ENCODE measurements at regions of chr5 and their contacts with region 1.

Region 1: GRCh38 chr5:102681407-102681983 is 73.6 kb upstream of the PAM start:
- DNase-seq: peak; percentile 84
- H3K4me3 Mint-ChIP-seq: no peak overlapping the region
- H3K27ac Mint-ChIP-seq: no peak overlapping the region
- H3K4me1 Mint-ChIP-seq: no peaks in the 10 kb centered on the region
- H3K27me3 Mint-ChIP-seq: peaks cover 7% of the 10 kb centered on the region

Region 2: GRCh38 chr5:102583276-102584124 is 98.0 kb before region 1 on chr5:
- CTCF ChIA-PET with region 1: interaction called, 6 read pairs
- intact Hi-C with region 1: loop called (anchors 2 kb)
- DNase-seq: no peak
- H3K4me3 Mint-ChIP-seq: no peak overlapping the region
- H3K27ac Mint-ChIP-seq: no peak overlapping the region
- H3K4me1 Mint-ChIP-seq: no peaks in the 10 kb centered on the region
- H3K27me3 Mint-ChIP-seq: peaks cover 6% of the 10 kb centered on the region

Region 3: DNA sequence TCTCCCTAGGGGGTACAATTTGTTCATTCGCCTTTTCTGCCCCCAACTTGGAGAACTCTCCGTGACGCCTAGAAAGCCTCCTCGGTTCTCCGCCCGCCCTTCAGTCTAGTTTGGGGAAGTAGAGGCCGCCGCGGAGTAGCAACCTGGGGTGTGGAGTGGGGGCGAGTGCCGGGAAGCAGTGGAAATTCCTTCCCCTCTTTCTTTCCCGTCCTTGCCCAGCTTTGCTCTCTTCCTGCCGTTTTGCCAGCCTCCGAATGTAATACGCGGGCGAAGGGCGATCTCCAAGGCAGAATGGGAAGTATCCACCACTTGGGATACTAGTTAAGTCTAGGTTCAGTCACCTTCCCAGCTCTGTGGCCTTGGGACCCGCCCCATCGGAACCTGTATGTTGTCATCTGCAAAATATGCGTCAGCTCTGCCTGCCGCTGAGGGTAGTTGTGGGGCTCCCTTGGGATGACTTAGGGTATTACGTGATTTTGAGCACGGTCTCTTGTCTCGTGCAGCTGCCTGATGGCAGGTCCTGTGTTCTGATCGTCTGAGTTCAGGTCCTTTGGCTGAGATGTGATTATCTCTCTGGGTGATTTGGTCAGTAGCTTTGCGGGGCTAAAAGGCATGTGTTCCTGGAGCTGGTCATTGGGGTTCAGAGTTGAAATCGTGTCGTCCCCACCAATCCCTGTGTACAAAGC is 74.3 kb after region 1 on chr5:
- CTCF ChIA-PET with region 1: interaction called, 5 read pairs
- intact Hi-C with region 1: loop called (anchors 2 kb)
- DNase-seq: peak; percentile 88
- H3K4me3 Mint-ChIP-seq: peak overlapping the region; percentile 93
- H3K27ac Mint-ChIP-seq: peak overlapping the region; percentile 93
- H3K4me1 Mint-ChIP-seq: peaks cover 52% of the 10 kb centered on the region
- H3K27me3 Mint-ChIP-seq: peaks cover 17% of the 10 kb centered on the region

Region 4: DNA sequence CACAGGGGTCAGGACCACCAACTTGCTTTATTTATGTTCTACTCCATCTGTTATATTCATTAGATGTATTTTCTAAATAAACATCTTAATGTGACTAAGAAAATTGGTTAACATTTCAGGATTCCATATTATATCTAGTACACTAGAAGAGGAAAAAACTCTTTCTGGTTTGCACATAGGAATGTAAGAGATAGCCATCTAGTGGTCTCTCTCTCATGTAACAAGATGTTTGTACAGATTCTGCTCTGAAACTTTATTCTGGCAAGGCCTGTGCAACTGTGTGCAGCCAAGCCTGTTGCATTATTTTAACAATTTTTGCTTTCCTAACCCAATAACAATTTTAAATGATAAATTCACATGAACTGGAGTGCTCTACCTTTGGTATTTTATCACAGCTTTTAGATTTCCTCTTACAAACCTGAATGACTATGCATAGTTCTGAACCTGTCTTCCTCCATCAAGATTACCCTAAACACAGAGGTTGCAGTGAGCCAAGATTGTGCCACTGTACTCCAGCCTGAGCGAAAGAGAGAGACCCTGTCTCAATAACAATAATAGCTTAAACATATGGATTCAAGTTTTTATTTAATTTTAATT is 290.3 kb after region 1 on chr5:
- CTCF ChIA-PET with region 1: interaction called, 4 read pairs
- intact Hi-C with region 1: loop called (anchors 1 kb)
- DNase-seq: no peak
- H3K4me3 Mint-ChIP-seq: no peak overlapping the region
- H3K27ac Mint-ChIP-seq: no peak overlapping the region
- H3K4me1 Mint-ChIP-seq: no peaks in the 10 kb centered on the region
- H3K27me3 Mint-ChIP-seq: no peaks in the 10 kb centered on the region

Region 5: DNA sequence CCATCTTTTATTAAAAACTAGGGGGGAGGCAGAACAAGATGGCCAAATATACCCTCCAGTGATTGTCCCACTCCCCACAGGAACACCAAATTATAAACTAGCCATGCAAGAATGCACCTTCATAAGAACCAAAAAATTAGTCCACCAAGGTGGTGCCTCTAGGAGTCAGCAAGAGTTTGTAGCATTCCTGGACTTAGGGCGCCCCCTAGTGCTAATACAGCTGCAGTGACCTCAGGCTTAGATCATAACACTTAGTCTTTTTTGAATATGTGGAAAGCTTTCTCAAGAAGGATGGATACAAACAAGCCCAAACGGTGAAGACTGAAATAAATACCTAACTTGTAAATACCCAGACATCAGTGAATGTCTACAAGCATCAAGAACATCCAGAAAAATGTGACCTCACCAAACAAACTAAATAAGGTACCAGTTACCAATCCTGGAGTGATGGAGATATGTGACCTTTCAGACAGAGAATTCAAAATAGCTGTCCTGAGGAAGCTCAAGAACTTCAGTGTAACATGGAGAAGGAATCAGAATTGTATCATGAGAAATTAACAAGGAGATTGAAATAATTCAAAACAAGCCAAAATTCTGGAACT is 457.9 kb after region 1 on chr5:
- CTCF ChIA-PET with region 1: interaction called, 29 read pairs
- intact Hi-C with region 1: loop called (anchors 1 kb)
- DNase-seq: peak; percentile 92
- H3K4me3 Mint-ChIP-seq: no peak overlapping the region
- H3K27ac Mint-ChIP-seq: no peak overlapping the region
- H3K4me1 Mint-ChIP-seq: peaks cover 5% of the 10 kb centered on the region
- H3K27me3 Mint-ChIP-seq: no peaks in the 10 kb centered on the region